ENCODE measurements at regions of chr7 and their contacts with region 1.

Region 1: GRCh38 chr7:121395961-121396757 is at the start of gene FAM3C:
- DNase-seq: peak; percentile 81
- ATAC-seq: peak; percentile 95
- H3K4me3 ChIP-seq: peak within 1 kb of the TSS; percentile 87 to 89 (median 88)
- H3K27ac ChIP-seq: peak within 1 kb of the TSS; percentile 79
- H3K4me1 ChIP-seq: peaks cover 42% of the 10 kb centered on the region
- H3K27me3 ChIP-seq: no peaks in the 10 kb centered on the region; a peak in 1 of 5 replicates
- CTCF ChIP-seq: peak; percentile 84
- EP300 ChIP-seq: no peak
- POLR2A ChIP-seq: peak; percentile 77 to 81
- RAD21 ChIP-seq: no peak; the same call in none of the 2 replicates
- total RNA-seq, gene FAM3C: 11.3 and 14.6 TPM in 2 replicates

Region 2: DNA sequence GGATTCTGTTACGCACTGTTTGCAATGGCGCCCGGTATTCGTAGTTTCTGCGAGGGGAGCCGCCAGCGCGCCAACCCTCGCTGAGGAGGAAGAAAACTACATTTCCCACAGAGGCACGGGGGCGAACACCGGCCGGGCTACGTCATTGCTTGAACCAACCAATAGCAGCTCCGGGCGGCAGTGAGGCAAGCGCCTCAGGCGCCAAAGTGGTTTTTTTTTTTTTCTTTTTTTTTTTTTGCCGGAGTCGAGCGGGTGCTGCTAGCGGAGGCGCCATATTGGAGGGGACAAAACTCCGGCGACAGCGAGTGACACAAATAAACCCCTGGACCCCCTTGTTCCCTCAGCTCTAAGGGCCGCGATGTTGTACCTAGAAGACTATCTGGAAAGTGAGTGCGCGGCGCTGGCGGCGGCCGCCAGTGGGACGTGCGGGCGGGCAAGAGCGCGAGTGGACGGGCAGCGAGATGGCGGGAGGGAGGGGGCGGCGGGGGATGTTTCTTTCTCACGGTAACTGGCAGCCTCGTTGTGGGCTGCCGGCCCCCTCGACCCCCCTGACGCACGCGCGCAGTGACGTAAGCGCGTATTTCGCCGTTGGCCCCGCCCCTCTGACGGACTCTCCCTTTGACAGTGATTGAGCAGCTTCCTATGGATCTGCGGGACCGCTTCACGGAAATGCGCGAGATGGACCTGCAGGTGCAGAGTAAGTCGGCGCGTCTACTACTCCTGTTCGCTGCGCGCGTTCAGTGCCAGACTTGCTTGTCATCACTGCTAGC is 445.4 kb before region 1 on chr7 and contains the start of gene ING3:
- CTCF ChIA-PET with region 1: no interaction called
- POLR2A ChIA-PET with region 1: interaction called, 5 read pairs
- in situ Hi-C with region 1: no loop called
- intact Hi-C with region 1: loop called (anchors 5 kb)
- DNase-seq: peak; percentile 95
- ATAC-seq: peak; percentile 97
- H3K4me3 ChIP-seq: peak within 1 kb of the TSS; percentile 69 to 91 (median 78)
- H3K27ac ChIP-seq: peak within 1 kb of the TSS; percentile 98
- H3K4me1 ChIP-seq: peaks cover 19% of the 10 kb centered on the region
- H3K27me3 ChIP-seq: no peaks in the 10 kb centered on the region
- CTCF ChIP-seq: no peak
- EP300 ChIP-seq: no peak
- POLR2A ChIP-seq: peak; percentile 55 to 75
- RAD21 ChIP-seq: no peak
- total RNA-seq, gene ING3: 12.8 and 17.3 TPM in 2 replicates

Region 3: GRCh38 chr7:121329191-121330052 is 66.7 kb before region 1 on chr7:
- CTCF ChIA-PET with region 1: no interaction called
- POLR2A ChIA-PET with region 1: no interaction called
- in situ Hi-C with region 1: no loop called
- intact Hi-C with region 1: no loop called
- DNase-seq: no peak
- ATAC-seq: peak; percentile 68
- H3K4me3 ChIP-seq: no peak overlapping the region
- H3K27ac ChIP-seq: no peak overlapping the region
- H3K4me1 ChIP-seq: peaks cover 4% of the 10 kb centered on the region; the same call in 1 of the 2 replicates
- H3K27me3 ChIP-seq: peaks cover 3 to 45% of the 10 kb centered on the region in 2 experiments; a peak in 3 of 5 replicates
- CTCF ChIP-seq: no peak
- EP300 ChIP-seq: no peak
- POLR2A ChIP-seq: no peak
- RAD21 ChIP-seq: no peak

Region 4: DNA sequence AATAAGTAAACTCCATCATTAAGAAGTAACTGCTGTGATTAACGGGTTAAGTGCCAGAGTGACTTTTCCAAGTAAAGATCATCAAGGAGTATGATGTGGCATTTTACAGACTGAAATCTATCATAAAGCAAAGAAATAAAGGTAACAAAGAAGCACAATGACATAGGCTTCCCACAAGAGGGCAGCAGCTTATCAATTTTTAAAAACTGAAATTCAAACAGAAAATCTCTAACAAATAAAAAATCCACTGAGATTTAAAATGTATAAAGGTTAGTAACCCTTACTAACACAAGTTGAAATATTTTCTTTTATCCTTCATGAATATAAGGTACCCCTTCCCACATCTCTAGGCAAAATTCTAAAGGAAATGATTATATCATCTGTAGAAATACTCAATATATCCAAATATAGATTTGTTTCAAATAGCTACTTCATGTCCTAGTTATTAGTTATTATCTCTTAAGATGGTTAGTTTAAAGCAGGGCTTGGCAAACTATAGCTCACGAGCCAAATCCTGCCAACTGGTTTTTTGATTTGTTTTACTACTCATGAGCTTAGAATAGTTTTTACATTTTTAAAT is 29.2 kb before region 1 on chr7:
- CTCF ChIA-PET with region 1: interaction called, 5 read pairs
- POLR2A ChIA-PET with region 1: interaction called, 7 read pairs
- in situ Hi-C with region 1: no loop called
- intact Hi-C with region 1: loop called (anchors 1 kb)
- DNase-seq: peak; percentile 18
- ATAC-seq: no peak
- H3K4me3 ChIP-seq: no peak overlapping the region
- H3K27ac ChIP-seq: no peak overlapping the region
- H3K4me1 ChIP-seq: no peaks in the 10 kb centered on the region
- H3K27me3 ChIP-seq: no peaks in the 10 kb centered on the region
- CTCF ChIP-seq: peak; percentile 61
- EP300 ChIP-seq: no peak
- POLR2A ChIP-seq: no peak
- RAD21 ChIP-seq: 0 out of 2 replicates have a peak, but pooled peaks have one; percentile 31

Region 5: GRCh38 chr7:121379930-121380329 is 16.2 kb before region 1 on chr7:
- CTCF ChIA-PET with region 1: no interaction called
- POLR2A ChIA-PET with region 1: interaction called, 5 read pairs
- in situ Hi-C with region 1: no loop called
- intact Hi-C with region 1: loop called (anchors 2 kb)
- DNase-seq: no peak
- ATAC-seq: no peak
- H3K4me3 ChIP-seq: no peak overlapping the region
- H3K27ac ChIP-seq: no peak overlapping the region
- H3K4me1 ChIP-seq: no peaks in the 10 kb centered on the region
- H3K27me3 ChIP-seq: no peaks in the 10 kb centered on the region
- CTCF ChIP-seq: no peak
- EP300 ChIP-seq: no peak
- POLR2A ChIP-seq: no peak
- RAD21 ChIP-seq: no peak

Region 6: GRCh38 chr7:121419201-121420148 is 23.3 kb after region 1 on chr7:
- CTCF ChIA-PET with region 1: no interaction called
- POLR2A ChIA-PET with region 1: no interaction called
- in situ Hi-C with region 1: no loop called
- intact Hi-C with region 1: no loop called
- DNase-seq: no peak
- ATAC-seq: no peak
- H3K4me3 ChIP-seq: no peak overlapping the region
- H3K27ac ChIP-seq: no peak overlapping the region
- H3K4me1 ChIP-seq: no peaks in the 10 kb centered on the region
- H3K27me3 ChIP-seq: no peaks in the 10 kb centered on the region
- CTCF ChIP-seq: no peak
- EP300 ChIP-seq: no peak
- POLR2A ChIP-seq: no peak
- RAD21 ChIP-seq: no peak

Region 7: DNA sequence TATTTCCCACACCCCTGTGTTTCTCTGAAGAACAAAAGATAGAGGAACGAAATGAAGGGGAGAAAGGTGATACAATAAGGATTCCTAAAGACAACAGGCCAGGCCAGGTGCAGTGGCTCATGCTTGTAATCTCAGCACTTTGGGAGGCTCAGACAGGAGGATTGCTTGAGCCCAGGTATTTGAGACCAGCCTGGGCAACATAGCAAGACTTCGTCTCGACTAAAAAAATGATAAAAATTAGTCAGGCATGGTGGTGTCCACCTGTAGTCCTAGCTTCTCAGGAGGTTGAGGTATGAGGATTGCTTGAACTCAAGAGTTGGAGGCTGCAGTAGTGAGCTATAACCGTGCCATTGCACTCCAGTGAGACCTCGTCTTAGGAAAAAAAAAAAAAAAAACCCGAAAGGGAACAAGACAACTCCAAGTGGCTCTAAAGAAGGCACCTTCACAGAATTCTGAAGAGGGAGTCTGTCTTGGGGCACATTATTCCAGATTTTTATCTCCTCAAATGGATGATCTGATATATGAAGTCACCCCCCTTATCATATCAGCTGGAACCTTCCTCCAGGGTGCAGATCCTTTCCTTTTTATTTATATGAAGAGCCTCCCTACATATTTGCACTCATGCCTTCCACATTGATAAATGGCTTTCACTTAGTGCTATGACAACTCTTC is 41.4 kb after region 1 on chr7:
- CTCF ChIA-PET with region 1: no interaction called
- POLR2A ChIA-PET with region 1: interaction called, 7 read pairs
- in situ Hi-C with region 1: no loop called
- intact Hi-C with region 1: loop called (anchors 5 kb)
- DNase-seq: no peak
- ATAC-seq: no peak
- H3K4me3 ChIP-seq: 0 out of 6 replicates have a peak overlapping the region, but pooled peaks of 1 of the 3 experiments have one; percentile 23
- H3K27ac ChIP-seq: no peak overlapping the region
- H3K4me1 ChIP-seq: peaks cover 5% of the 10 kb centered on the region; the same call in 1 of the 2 replicates
- H3K27me3 ChIP-seq: no peaks in the 10 kb centered on the region
- CTCF ChIP-seq: no peak
- EP300 ChIP-seq: no peak
- POLR2A ChIP-seq: no peak
- RAD21 ChIP-seq: no peak

Region 8: DNA sequence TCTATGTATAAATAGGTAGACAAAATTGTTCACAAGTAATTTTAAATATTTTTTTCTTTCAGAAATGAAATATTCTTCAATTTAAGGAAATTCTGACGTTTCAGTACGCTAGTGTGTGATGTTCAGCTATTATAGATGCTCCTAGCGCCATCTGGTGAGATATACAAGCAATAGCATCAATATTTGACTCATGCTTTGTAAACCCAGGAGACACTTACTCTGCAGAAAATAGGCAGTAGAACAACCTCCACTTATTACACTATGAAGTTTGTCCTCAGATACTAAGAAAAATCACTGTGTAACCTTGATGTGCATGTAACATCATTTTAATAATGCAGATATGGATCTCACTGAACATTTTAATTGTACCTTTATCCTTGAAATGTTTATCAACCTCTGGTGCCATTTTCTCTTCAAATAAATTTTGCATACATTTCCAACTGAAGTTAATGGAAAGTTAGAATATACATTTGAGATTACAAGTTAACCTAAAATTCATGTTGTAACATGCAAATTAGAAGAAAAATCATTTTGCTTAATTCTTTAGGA is 151.5 kb after region 1 on chr7:
- CTCF ChIA-PET with region 1: no interaction called
- POLR2A ChIA-PET with region 1: no interaction called
- in situ Hi-C with region 1: no loop called
- intact Hi-C with region 1: loop called (anchors 1 kb)
- DNase-seq: peak; percentile 44
- ATAC-seq: peak; percentile 84
- H3K4me3 ChIP-seq: no peak overlapping the region
- H3K27ac ChIP-seq: no peak overlapping the region
- H3K4me1 ChIP-seq: no peaks in the 10 kb centered on the region
- H3K27me3 ChIP-seq: no peaks in the 10 kb centered on the region
- CTCF ChIP-seq: peak; percentile 77
- EP300 ChIP-seq: no peak
- POLR2A ChIP-seq: no peak
- RAD21 ChIP-seq: no peak

Measured in HepG2 (cell line).